CD4-positive, alpha-beta T cell (primary cell): ENCODE measurements at regions of chr1 and their contacts with region 1.

Region 1: GRCh38 chr1:109112652-109113285 is 1.1 kb upstream of the ELAPOR1 start:
- DNase-seq: peak; percentile 84 to 94 (median 89)
- ATAC-seq: peak; percentile 52
- H3K4me3 ChIP-seq: peak overlapping the region; percentile 63
- H3K4me3 Mint-ChIP-seq: peak overlapping the region; percentile 94
- H3K27ac ChIP-seq: peak overlapping the region in 1 of 2 donors; percentile 51
- H3K27ac Mint-ChIP-seq: peak overlapping the region; percentile 98
- H3K4me1 ChIP-seq: peaks cover 26% of the 10 kb centered on the region
- H3K4me1 Mint-ChIP-seq: peaks cover 31% of the 10 kb centered on the region
- H3K27me3 ChIP-seq: no peaks in the 10 kb centered on the region
- H3K27me3 Mint-ChIP-seq: peaks cover 9% of the 10 kb centered on the region
- CTCF ChIP-seq: peak; percentile 93

Region 2: DNA sequence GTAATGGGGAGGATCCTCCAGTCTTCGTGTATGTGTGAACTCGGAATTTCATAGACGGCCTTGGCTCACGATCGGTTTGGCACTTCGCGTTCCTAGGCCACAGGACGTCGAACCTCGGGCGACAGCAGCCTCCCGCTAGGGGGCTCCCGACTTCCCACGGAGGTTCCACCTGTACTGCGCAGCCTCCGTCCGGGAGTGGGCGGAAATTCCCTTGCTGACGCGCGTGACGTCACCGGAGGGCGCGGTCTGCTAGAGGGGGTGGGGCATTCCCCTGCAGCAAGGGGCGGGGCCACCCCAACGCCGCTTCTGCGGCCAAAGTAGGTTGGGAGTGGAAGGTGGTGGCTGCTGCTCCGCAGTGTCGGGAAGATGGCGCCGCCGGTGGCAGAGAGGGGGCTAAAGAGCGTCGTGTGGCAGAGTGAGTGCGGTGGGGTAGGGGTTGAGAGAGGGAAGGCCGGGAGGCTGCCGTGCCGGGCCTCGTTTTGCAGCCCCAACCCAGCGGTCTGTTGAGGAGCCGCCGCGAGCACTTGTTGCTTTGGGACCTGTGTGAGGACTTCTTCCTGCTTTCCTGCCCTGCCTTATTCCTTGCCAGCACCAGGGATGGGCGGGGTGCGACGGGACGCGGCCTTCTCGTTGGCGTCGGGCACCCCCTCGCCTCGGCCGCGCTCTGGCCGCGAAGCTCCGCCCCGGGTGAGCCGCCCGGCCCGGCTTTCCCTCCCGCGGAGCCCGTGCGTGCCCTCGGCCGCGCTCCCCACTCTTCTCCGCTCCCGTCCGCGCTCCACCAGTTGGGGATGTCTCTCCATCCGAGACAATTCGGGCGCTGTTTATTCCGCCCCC is 366.2 kb before region 1 on chr1 and contains the start of gene STXBP3:
- CTCF ChIA-PET with region 1: no interaction called
- POLR2A ChIA-PET with region 1: no interaction called
- intact Hi-C with region 1: loop called in 1 of 2 experiments (anchors 5 kb)
- DNase-seq: peak; percentile 99 to 100 (median 100)
- ATAC-seq: peak; percentile 95
- H3K4me3 ChIP-seq: peak within 1 kb of the TSS; percentile 92
- H3K4me3 Mint-ChIP-seq: peak within 1 kb of the TSS; percentile 97
- H3K27ac ChIP-seq: peak within 1 kb of the TSS; percentile 90 to 95
- H3K27ac Mint-ChIP-seq: peak within 1 kb of the TSS; percentile 91
- H3K4me1 ChIP-seq: peaks cover 14% of the 10 kb centered on the region
- H3K4me1 Mint-ChIP-seq: peaks cover 44% of the 10 kb centered on the region
- H3K27me3 ChIP-seq: no peaks in the 10 kb centered on the region
- H3K27me3 Mint-ChIP-seq: no peaks in the 10 kb centered on the region
- CTCF ChIP-seq: peak; percentile 92
- total RNA-seq, gene STXBP3: 41.6 to 50.5 TPM

Region 3: DNA sequence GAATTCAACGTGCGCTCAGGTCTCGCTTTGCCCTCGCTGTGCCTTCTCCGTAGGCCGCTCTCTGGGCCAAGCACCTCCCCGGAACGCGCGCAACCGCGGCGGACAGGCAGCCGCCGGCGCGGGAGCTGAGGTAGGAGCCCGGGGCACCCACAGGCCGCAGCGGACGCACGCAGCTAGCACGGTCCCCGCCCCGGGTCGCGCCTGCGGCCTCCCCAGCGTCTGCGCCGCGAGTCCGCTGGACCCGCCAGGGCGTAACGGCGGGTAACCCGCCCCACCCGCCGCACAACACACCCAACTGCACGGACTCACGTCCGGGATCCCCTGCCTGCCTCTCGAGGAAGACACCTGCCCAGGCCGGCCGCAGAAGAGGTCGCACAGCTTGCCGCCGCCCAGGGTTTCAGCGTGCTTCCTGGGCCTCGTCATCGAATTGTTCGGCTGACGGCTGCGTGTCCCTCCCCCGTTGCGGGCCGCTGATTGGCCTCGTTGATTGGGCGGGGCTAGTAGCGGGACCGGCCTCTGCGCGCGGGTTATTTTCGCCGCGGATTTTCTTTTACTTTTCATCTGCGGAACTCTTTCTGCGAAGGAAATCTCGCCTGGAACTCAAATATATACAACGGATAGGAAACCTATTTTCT is 149.6 kb before region 1 on chr1 and contains the start of gene CLCC1:
- CTCF ChIA-PET with region 1: interaction called, 3 read pairs
- POLR2A ChIA-PET with region 1: no interaction called
- intact Hi-C with region 1: loop called (anchors 2 to 5 kb)
- DNase-seq: peak; percentile 80 to 97 (median 88)
- ATAC-seq: peak; percentile 93
- H3K4me3 ChIP-seq: peak within 1 kb of the TSS; percentile 59
- H3K4me3 Mint-ChIP-seq: peak within 1 kb of the TSS; percentile 94
- H3K27ac ChIP-seq: peak within 1 kb of the TSS; percentile 64 to 79
- H3K27ac Mint-ChIP-seq: peak within 1 kb of the TSS; percentile 93
- H3K4me1 ChIP-seq: peaks cover 31% of the 10 kb centered on the region
- H3K4me1 Mint-ChIP-seq: peaks cover 47% of the 10 kb centered on the region
- H3K27me3 ChIP-seq: no peaks in the 10 kb centered on the region
- H3K27me3 Mint-ChIP-seq: no peaks in the 10 kb centered on the region
- CTCF ChIP-seq: no peak
- total RNA-seq, gene CLCC1: 8.6 to 9.1 TPM

Region 4: GRCh38 chr1:109041621-109042468 is 70.9 kb before region 1 on chr1 and contains the start of gene WDR47:
- CTCF ChIA-PET with region 1: interaction called, 13 read pairs
- POLR2A ChIA-PET with region 1: interaction called, 14 read pairs
- intact Hi-C with region 1: loop called in 1 of 2 experiments (anchors 5 kb)
- DNase-seq: peak; percentile 91 to 99 (median 95)
- ATAC-seq: peak; percentile 97
- H3K4me3 ChIP-seq: peak within 1 kb of the TSS; percentile 99
- H3K4me3 Mint-ChIP-seq: peak within 1 kb of the TSS; percentile 97
- H3K27ac ChIP-seq: peak within 1 kb of the TSS; percentile 69 to 79
- H3K27ac Mint-ChIP-seq: peak within 1 kb of the TSS; percentile 91
- H3K4me1 ChIP-seq: peaks cover 14% of the 10 kb centered on the region
- H3K4me1 Mint-ChIP-seq: peaks cover 22% of the 10 kb centered on the region
- H3K27me3 ChIP-seq: no peaks in the 10 kb centered on the region
- H3K27me3 Mint-ChIP-seq: no peaks in the 10 kb centered on the region
- CTCF ChIP-seq: no peak
- total RNA-seq, gene WDR47: 16.2 to 18.7 TPM

Region 5: DNA sequence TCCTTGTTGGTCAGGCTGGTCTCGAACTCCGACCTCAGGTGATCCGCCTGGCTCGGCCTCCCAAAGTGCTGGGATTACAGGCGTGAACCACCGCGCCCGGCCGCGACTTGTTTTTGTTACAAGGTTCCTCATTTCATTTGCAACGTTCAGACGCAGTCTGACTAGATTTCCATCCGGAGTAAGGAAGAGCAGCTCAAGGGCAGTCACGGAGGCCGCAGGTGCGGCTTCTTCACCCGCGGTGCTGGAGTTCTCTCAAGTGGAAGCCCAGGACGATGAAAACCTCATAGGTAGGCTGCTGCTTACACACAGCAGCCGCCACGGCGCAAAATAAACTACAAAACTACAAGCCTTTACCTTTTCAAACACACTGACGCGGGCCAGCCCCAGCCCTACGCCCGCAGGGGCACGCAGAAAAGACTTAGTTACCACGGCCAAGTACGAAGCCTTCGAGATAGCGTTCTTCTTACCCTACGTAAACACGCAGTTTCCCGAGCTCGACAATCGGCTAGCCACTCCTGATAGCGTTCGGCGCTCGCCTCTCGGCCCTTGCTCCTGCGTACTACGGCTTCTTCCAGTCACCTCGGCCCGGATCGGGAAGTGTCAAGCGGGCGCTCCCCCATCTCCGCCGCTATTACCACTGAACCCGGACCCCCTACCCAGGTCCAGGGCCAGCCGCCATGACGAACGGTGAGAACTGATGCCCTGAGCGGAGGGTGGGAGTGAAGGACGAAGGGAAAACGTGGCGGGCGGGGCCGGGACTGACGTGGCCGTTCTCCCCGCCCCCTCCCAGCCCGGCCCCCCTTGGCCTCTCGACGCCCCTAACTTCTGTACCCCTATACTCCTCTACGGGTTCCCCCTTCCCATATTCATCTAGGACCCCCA is 22.3 kb before region 1 on chr1 and contains the start of gene TMEM167B:
- CTCF ChIA-PET with region 1: interaction called, 32 read pairs
- POLR2A ChIA-PET with region 1: interaction called, 9 read pairs
- intact Hi-C with region 1: loop called (anchors 1 kb)
- DNase-seq: peak; percentile 76 to 94 (median 82)
- ATAC-seq: peak; percentile 86
- H3K4me3 ChIP-seq: peak within 1 kb of the TSS; percentile 98
- H3K4me3 Mint-ChIP-seq: peak within 1 kb of the TSS; percentile 97
- H3K27ac ChIP-seq: peak within 1 kb of the TSS; percentile 84 to 98
- H3K27ac Mint-ChIP-seq: peak within 1 kb of the TSS; percentile 94
- H3K4me1 ChIP-seq: peaks cover 27% of the 10 kb centered on the region
- H3K4me1 Mint-ChIP-seq: peaks cover 44% of the 10 kb centered on the region
- H3K27me3 ChIP-seq: no peaks in the 10 kb centered on the region
- H3K27me3 Mint-ChIP-seq: no peaks in the 10 kb centered on the region
- CTCF ChIP-seq: no peak
- total RNA-seq, gene TMEM167B: 70.2 to 71.0 TPM

Region 6: DNA sequence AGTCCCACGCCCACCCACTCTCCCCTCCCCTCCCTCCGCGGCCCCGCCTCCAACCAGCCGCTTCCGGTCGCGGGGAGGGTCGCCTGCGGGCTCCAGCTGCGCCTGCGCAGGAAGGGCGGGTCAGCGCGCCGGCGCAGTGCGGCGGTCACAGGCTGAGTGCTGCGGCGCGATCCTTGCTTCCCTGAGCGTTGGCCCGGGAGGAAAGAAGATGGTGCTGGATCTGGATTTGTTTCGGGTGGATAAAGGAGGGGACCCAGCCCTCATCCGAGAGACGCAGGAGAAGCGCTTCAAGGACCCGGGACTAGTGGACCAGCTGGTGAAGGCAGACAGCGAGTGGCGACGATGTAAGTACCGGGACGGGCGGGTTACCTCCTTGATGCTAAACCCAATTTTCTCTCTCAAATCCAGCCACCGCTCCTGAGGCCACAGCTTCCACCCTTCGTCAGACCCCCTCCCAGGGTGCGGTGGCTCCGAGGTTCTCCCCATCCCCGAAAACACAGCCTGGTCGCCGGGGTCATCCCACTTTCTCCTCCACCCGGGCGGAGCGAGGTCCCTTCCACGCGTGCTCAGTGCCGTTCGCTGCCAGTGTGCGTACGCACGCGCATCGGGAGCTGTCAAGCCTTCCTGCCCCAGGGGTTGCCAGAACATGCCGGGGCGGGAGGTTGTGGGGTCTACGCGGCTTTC is 101.2 kb after region 1 on chr1 and contains the start of gene SARS1:
- CTCF ChIA-PET with region 1: interaction called, 3 read pairs
- POLR2A ChIA-PET with region 1: interaction called, 18 read pairs
- intact Hi-C with region 1: loop called (anchors 5 to 10 kb)
- DNase-seq: peak; percentile 75 to 95 (median 88)
- ATAC-seq: peak; percentile 82
- H3K4me3 ChIP-seq: peak within 1 kb of the TSS; percentile 81
- H3K4me3 Mint-ChIP-seq: peak within 1 kb of the TSS; percentile 99
- H3K27ac ChIP-seq: peak within 1 kb of the TSS; percentile 73 to 74
- H3K27ac Mint-ChIP-seq: peak within 1 kb of the TSS; percentile 90
- H3K4me1 ChIP-seq: peaks cover 33% of the 10 kb centered on the region
- H3K4me1 Mint-ChIP-seq: peaks cover 41% of the 10 kb centered on the region
- H3K27me3 ChIP-seq: no peaks in the 10 kb centered on the region
- H3K27me3 Mint-ChIP-seq: no peaks in the 10 kb centered on the region
- CTCF ChIP-seq: no peak
- total RNA-seq, gene SARS1: 122 to 131 TPM